ENCODE measurements at regions of chr10 and their contacts with region 1.

Region 1: GRCh38 chr10:60810809-60811182 is 32.5 kb downstream of the CDK1 start:
- DNase-seq: peak in 1 of 7 donors; percentile 21
- H3K4me3 ChIP-seq: no peak overlapping the region
- H3K27ac ChIP-seq: peak overlapping the region in 3 of 5 donors; percentile 23 to 71 (median 50)
- H3K4me1 ChIP-seq: peaks cover 6 to 18% of the 10 kb centered on the region in 2 donors
- H3K27me3 ChIP-seq: no peaks in the 10 kb centered on the region
- CTCF ChIP-seq: no peak
- POLR2A ChIP-seq: no peak

Region 2: GRCh38 chr10:61130366-61130765 is 319.6 kb after region 1 on chr10:
- intact Hi-C with region 1: loop called in 1 of 2 experiments (anchors 5 kb)
- DNase-seq: no peak
- H3K4me3 ChIP-seq: no peak overlapping the region
- H3K27ac ChIP-seq: no peak overlapping the region
- H3K4me1 ChIP-seq: no peaks in the 10 kb centered on the region
- H3K27me3 ChIP-seq: no peaks in the 10 kb centered on the region
- CTCF ChIP-seq: no peak
- POLR2A ChIP-seq: no peak